IMR-90 (cell line): ENCODE measurements at regions of chr4 and their contacts with region 1.

Region 1: GRCh38 chr4:78864405-78865024 is 74.7 kb downstream of the PAQR3 start:
- DNase-seq: peak; percentile 85
- ATAC-seq: peak; percentile 66
- H3K4me3 ChIP-seq: no peak overlapping the region
- H3K27ac ChIP-seq: no peak overlapping the region
- H3K4me1 ChIP-seq: no peaks in the 10 kb centered on the region
- H3K27me3 ChIP-seq: no peaks in the 10 kb centered on the region
- CTCF ChIP-seq: peak; percentile 83
- POLR2A ChIP-seq: no peak
- RAD21 ChIP-seq: peak; percentile 87

Region 2: DNA sequence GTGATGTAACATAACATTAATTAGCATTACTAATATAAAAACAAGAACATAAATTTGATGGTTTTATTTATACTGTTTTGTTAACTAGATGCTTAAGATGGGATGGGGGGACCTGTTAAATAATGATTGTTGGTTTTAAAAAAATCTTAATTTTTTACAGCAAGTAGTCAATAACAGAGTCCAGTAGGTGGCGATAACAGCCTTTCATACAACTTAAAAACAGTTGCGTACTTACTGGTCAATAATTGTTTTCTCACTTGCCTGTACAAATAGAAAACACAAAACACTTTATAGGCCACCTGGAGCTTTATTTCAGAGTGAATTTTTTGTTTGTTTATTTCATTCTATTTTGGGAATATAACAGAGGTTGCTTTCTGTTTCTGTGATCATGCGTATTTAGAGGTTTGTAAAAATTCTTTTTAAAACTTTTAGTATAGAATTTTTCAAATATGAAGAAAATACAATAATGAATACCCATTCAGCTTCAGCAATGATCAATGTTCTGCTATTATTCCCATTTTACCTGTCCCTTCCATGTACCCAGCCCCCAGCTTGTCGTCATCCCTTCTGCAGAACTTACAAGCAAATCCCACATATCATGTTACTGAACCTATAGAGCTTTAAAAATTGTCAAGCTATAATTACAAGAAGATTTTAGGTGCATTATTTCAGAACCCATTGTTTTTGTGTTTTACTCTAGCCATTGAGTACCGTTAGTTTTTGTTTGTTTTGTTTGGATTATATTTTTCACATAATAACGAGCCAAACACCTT is 904.8 kb before region 1 on chr4:
- CTCF ChIA-PET with region 1: no interaction called
- POLR2A ChIA-PET with region 1: no interaction called
- dilution Hi-C with region 1: no loop called
- in situ Hi-C with region 1: loop called (anchors 25 kb)
- intact Hi-C with region 1: loop called (anchors 2 kb)
- DNase-seq: peak; percentile 57
- ATAC-seq: peak; percentile 61; the same call in 1 of the 2 replicates
- H3K4me3 ChIP-seq: no peak overlapping the region
- H3K27ac ChIP-seq: no peak overlapping the region
- H3K4me1 ChIP-seq: no peaks in the 10 kb centered on the region
- H3K27me3 ChIP-seq: no peaks in the 10 kb centered on the region
- CTCF ChIP-seq: peak; percentile 70
- POLR2A ChIP-seq: no peak
- RAD21 ChIP-seq: peak; percentile 70

Region 3: GRCh38 chr4:78004270-78004669 is 860.2 kb before region 1 on chr4:
- CTCF ChIA-PET with region 1: no interaction called
- POLR2A ChIA-PET with region 1: no interaction called
- dilution Hi-C with region 1: no loop called
- in situ Hi-C with region 1: no loop called
- intact Hi-C with region 1: no loop called
- DNase-seq: no peak
- ATAC-seq: no peak
- H3K4me3 ChIP-seq: no peak overlapping the region
- H3K27ac ChIP-seq: no peak overlapping the region
- H3K4me1 ChIP-seq: no peaks in the 10 kb centered on the region
- H3K27me3 ChIP-seq: no peaks in the 10 kb centered on the region; the same call in 1 of the 2 replicates
- CTCF ChIP-seq: no peak
- POLR2A ChIP-seq: no peak
- RAD21 ChIP-seq: no peak

Region 4: DNA sequence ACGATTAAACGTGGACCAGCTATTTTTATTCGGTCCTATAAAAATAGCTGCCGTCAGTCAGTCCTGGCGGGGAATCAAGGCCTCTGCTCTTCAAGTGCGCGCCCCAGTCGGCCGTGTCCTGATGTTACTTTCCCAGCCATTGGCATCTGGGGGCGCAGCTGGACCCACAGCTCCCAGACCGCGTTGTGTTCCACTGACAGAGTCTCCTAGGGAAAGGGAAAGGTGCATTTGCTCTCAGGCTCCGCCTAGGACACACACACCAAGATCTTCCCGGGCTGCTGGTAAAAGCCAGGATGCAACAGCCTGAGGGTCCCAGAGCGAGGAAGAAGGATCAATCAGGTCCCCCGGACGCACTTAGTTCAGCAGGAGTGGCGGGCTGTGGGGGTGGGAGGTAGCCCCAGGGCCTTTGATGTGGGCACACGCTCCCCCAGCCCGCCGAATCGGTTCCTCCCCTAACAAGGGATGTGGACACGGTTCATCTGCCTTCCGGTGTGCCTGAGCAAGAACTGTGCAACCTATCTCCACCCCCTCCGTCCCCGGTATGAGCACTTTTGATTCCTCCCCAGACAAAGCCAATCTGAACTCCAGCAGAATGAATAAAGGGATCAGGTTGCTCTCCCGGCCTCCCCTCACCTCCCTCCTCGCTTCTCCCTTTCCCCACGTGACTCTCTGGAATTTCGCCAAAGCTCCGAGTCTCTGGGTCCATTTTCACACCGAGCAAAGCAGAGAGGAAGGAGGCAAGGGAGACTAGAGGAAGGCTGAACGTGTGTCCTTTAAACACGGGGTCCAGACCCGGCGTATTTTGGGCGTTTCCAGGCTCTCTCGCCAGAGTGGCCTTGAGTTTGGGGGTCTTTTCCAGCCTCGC is 808.0 kb before region 1 on chr4:
- CTCF ChIA-PET with region 1: no interaction called
- POLR2A ChIA-PET with region 1: no interaction called
- dilution Hi-C with region 1: no loop called
- in situ Hi-C with region 1: no loop called
- intact Hi-C with region 1: loop called (anchors 5 kb)
- DNase-seq: peak; percentile 24
- ATAC-seq: peak; percentile 37
- H3K4me3 ChIP-seq: peak overlapping the region; percentile 57
- H3K27ac ChIP-seq: no peak overlapping the region
- H3K4me1 ChIP-seq: peaks cover 2% of the 10 kb centered on the region; the same call in 1 of the 2 replicates
- H3K27me3 ChIP-seq: peaks cover 46% of the 10 kb centered on the region
- CTCF ChIP-seq: no peak
- POLR2A ChIP-seq: no peak
- RAD21 ChIP-seq: no peak

Region 5: GRCh38 chr4:78517050-78517652 is 347.4 kb before region 1 on chr4:
- CTCF ChIA-PET with region 1: no interaction called
- POLR2A ChIA-PET with region 1: no interaction called
- dilution Hi-C with region 1: no loop called
- in situ Hi-C with region 1: no loop called
- intact Hi-C with region 1: loop called (anchors 2 kb)
- DNase-seq: peak; percentile 43
- ATAC-seq: peak; percentile 71
- H3K4me3 ChIP-seq: no peak overlapping the region
- H3K27ac ChIP-seq: no peak overlapping the region
- H3K4me1 ChIP-seq: no peaks in the 10 kb centered on the region
- H3K27me3 ChIP-seq: peaks cover 2% of the 10 kb centered on the region; the same call in 1 of the 2 replicates
- CTCF ChIP-seq: peak; percentile 75
- POLR2A ChIP-seq: no peak
- RAD21 ChIP-seq: peak; percentile 77

Region 6: GRCh38 chr4:78612398-78613178 is 251.9 kb before region 1 on chr4:
- CTCF ChIA-PET with region 1: interaction called, 6 read pairs
- POLR2A ChIA-PET with region 1: no interaction called
- dilution Hi-C with region 1: loop called (anchors 25 kb)
- in situ Hi-C with region 1: loop called (anchors 5 kb)
- intact Hi-C with region 1: loop called (anchors 1 kb)
- DNase-seq: peak; percentile 61
- ATAC-seq: peak; percentile 73
- H3K4me3 ChIP-seq: no peak overlapping the region
- H3K27ac ChIP-seq: no peak overlapping the region
- H3K4me1 ChIP-seq: no peaks in the 10 kb centered on the region; the same call in 1 of the 2 replicates
- H3K27me3 ChIP-seq: no peaks in the 10 kb centered on the region
- CTCF ChIP-seq: peak; percentile 65
- POLR2A ChIP-seq: no peak
- RAD21 ChIP-seq: peak; percentile 76

Region 7: GRCh38 chr4:78644744-78645330 is 219.7 kb before region 1 on chr4:
- CTCF ChIA-PET with region 1: interaction called, 4 read pairs
- POLR2A ChIA-PET with region 1: no interaction called
- dilution Hi-C with region 1: no loop called
- in situ Hi-C with region 1: no loop called
- intact Hi-C with region 1: loop called (anchors 2 kb)
- DNase-seq: peak; percentile 86
- ATAC-seq: peak; percentile 74
- H3K4me3 ChIP-seq: no peak overlapping the region
- H3K27ac ChIP-seq: peak overlapping the region; percentile 99; the same call in 1 of the 2 replicates
- H3K4me1 ChIP-seq: peaks cover 6% of the 10 kb centered on the region
- H3K27me3 ChIP-seq: no peaks in the 10 kb centered on the region
- CTCF ChIP-seq: peak; percentile 87
- POLR2A ChIP-seq: no peak
- RAD21 ChIP-seq: peak; percentile 74

Region 8: DNA sequence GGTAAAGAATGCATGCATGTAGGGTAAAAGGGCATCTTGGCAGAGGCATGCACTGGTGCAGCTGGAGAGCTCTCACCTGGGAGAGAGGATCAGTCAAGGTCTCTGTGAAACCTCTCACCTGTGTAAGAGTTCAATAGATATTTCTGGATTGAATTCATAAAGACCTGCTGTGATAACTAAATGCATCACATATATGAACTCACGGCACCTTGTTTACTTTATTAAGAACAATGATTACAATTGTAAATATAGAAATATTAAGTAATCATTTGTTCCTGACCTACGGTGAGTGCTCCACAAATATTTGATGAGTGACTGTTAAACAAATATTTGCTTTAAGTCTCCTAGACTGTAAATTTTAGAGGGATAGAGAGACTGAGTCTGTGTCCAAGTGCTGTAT is 160.7 kb after region 1 on chr4:
- CTCF ChIA-PET with region 1: no interaction called
- POLR2A ChIA-PET with region 1: no interaction called
- dilution Hi-C with region 1: no loop called
- in situ Hi-C with region 1: no loop called
- intact Hi-C with region 1: no loop called
- DNase-seq: no peak
- ATAC-seq: no peak
- H3K4me3 ChIP-seq: no peak overlapping the region
- H3K27ac ChIP-seq: no peak overlapping the region
- H3K4me1 ChIP-seq: no peaks in the 10 kb centered on the region
- H3K27me3 ChIP-seq: no peaks in the 10 kb centered on the region
- CTCF ChIP-seq: no peak
- POLR2A ChIP-seq: no peak
- RAD21 ChIP-seq: no peak